Dendritic cell treated with granulocyte-macrophage colony-stimulating factor and Interleukin-4, amounts not matched to agents 40 ng/mL and 50 ng/mL, for 4 days (primary cell): ENCODE measurements at regions of chr4 and their contacts with region 1.

Region 1: DNA sequence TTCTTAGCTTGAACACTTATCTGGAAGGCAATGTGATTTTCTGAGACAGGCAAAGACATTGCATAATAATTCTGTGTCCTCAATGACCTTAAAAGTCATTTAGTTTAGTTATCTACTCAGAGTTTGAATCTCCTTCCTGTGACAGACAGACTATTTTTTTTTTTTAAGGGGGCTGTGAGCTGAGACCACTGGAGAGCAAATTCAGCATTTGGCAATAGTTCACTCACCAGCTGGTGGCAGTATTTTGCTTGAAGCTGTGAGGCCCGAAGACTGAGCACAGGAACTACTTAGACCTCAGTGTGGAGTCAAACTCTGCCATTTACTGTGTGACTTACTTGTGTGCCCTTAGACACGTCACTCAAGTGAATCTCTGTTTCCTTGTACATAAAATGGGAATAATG is 22.9 kb upstream of the CPE start:
- H3K4me3 Mint-ChIP-seq: no peak overlapping the region
- H3K27ac Mint-ChIP-seq: no peak overlapping the region
- H3K4me1 Mint-ChIP-seq: peaks cover 60% of the 10 kb centered on the region
- H3K27me3 Mint-ChIP-seq: no peaks in the 10 kb centered on the region

Region 2: GRCh38 chr4:164997324-164997723 is 358.6 kb before region 1 on chr4:
- intact Hi-C with region 1: no loop called
- H3K4me3 Mint-ChIP-seq: no peak overlapping the region
- H3K27ac Mint-ChIP-seq: no peak overlapping the region
- H3K4me1 Mint-ChIP-seq: no peaks in the 10 kb centered on the region
- H3K27me3 Mint-ChIP-seq: peaks cover 3% of the 10 kb centered on the region

Region 3: GRCh38 chr4:165464813-165465381 is 109.0 kb after region 1 on chr4:
- intact Hi-C with region 1: loop called (anchors 10 kb)
- H3K4me3 Mint-ChIP-seq: no peak overlapping the region
- H3K27ac Mint-ChIP-seq: no peak overlapping the region
- H3K4me1 Mint-ChIP-seq: no peaks in the 10 kb centered on the region
- H3K27me3 Mint-ChIP-seq: no peaks in the 10 kb centered on the region

Region 4: GRCh38 chr4:165905405-165906027 is 549.6 kb after region 1 on chr4:
- intact Hi-C with region 1: no loop called
- H3K4me3 Mint-ChIP-seq: no peak overlapping the region
- H3K27ac Mint-ChIP-seq: no peak overlapping the region
- H3K4me1 Mint-ChIP-seq: no peaks in the 10 kb centered on the region
- H3K27me3 Mint-ChIP-seq: no peaks in the 10 kb centered on the region